ENCODE measurements at regions of chr2 and their contacts with region 1.

Region 1: GRCh38 chr2:5691975-5692529 is at the start of gene SOX11:
- DNase-seq: peak; percentile 95
- ATAC-seq: peak; percentile 78
- H3K4me3 ChIP-seq: peak within 1 kb of the TSS; percentile 74
- H3K27ac ChIP-seq: peak within 1 kb of the TSS; percentile 77
- H3K4me1 ChIP-seq: peaks cover 1% of the 10 kb centered on the region; the same call in 1 of the 2 replicates
- H3K27me3 ChIP-seq: no peaks in the 10 kb centered on the region
- CTCF ChIP-seq: no peak
- POLR2A ChIP-seq: peak; percentile 91
- RAD21 ChIP-seq: no peak
- total RNA-seq, gene SOX11: 2.2 and 4.7 TPM in 2 replicates

Region 2: DNA sequence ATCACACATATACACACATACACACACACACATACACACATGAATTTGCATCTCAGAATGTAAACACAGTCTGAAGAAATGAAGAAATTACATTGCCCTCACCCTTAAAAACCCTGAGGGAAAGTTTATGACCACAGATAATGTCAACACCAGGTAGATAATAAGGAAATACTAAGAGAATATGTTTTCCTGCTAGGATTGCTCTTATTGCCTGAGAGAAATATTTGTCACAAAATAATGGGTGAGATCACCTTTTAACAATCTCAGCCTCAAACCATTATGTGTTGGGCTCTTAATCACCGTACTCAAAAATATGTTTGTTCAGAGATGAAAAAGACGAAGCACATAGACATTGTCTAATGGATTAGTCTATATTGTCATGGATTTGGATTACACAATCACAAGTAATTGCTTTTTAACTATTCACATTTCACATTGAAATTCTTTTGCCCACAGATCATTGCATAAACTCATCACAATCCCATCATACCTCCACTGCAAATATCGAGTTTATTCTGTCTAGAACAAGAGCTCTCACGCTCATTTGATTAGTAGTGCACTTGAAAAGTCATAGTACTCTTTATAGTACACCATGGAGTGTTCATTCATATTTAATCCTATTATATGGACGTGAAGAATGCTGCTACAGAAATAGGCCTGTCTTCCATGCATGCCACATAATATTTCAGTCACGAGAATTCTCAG is 97.9 kb before region 1 on chr2:
- CTCF ChIA-PET with region 1: no interaction called
- POLR2A ChIA-PET with region 1: no interaction called
- dilution Hi-C with region 1: no loop called
- in situ Hi-C with region 1: no loop called
- intact Hi-C with region 1: no loop called
- DNase-seq: no peak
- ATAC-seq: no peak
- H3K4me3 ChIP-seq: no peak overlapping the region
- H3K27ac ChIP-seq: no peak overlapping the region
- H3K4me1 ChIP-seq: peaks cover 3% of the 10 kb centered on the region; the same call in 1 of the 2 replicates
- H3K27me3 ChIP-seq: no peaks in the 10 kb centered on the region; the same call in 1 of the 2 replicates
- CTCF ChIP-seq: no peak
- POLR2A ChIP-seq: no peak
- RAD21 ChIP-seq: no peak

Region 3: GRCh38 chr2:6011921-6012320 is 319.9 kb after region 1 on chr2:
- CTCF ChIA-PET with region 1: no interaction called
- POLR2A ChIA-PET with region 1: no interaction called
- dilution Hi-C with region 1: no loop called
- in situ Hi-C with region 1: no loop called
- intact Hi-C with region 1: no loop called
- DNase-seq: no peak
- ATAC-seq: no peak
- H3K4me3 ChIP-seq: no peak overlapping the region
- H3K27ac ChIP-seq: no peak overlapping the region
- H3K4me1 ChIP-seq: peaks cover 3% of the 10 kb centered on the region; the same call in 1 of the 2 replicates
- H3K27me3 ChIP-seq: no peaks in the 10 kb centered on the region
- CTCF ChIP-seq: no peak
- POLR2A ChIP-seq: no peak
- RAD21 ChIP-seq: no peak

Region 4: GRCh38 chr2:6186332-6187151 is 494.5 kb after region 1 on chr2:
- CTCF ChIA-PET with region 1: no interaction called
- POLR2A ChIA-PET with region 1: no interaction called
- dilution Hi-C with region 1: no loop called
- in situ Hi-C with region 1: no loop called
- intact Hi-C with region 1: loop called (anchors 5 kb)
- DNase-seq: peak; percentile 87
- ATAC-seq: peak; percentile 92
- H3K4me3 ChIP-seq: no peak overlapping the region
- H3K27ac ChIP-seq: peak overlapping the region; percentile 41; the same call in 1 of the 2 replicates
- H3K4me1 ChIP-seq: peaks cover 11% of the 10 kb centered on the region
- H3K27me3 ChIP-seq: no peaks in the 10 kb centered on the region
- CTCF ChIP-seq: no peak
- POLR2A ChIP-seq: no peak
- RAD21 ChIP-seq: no peak

Region 5: DNA sequence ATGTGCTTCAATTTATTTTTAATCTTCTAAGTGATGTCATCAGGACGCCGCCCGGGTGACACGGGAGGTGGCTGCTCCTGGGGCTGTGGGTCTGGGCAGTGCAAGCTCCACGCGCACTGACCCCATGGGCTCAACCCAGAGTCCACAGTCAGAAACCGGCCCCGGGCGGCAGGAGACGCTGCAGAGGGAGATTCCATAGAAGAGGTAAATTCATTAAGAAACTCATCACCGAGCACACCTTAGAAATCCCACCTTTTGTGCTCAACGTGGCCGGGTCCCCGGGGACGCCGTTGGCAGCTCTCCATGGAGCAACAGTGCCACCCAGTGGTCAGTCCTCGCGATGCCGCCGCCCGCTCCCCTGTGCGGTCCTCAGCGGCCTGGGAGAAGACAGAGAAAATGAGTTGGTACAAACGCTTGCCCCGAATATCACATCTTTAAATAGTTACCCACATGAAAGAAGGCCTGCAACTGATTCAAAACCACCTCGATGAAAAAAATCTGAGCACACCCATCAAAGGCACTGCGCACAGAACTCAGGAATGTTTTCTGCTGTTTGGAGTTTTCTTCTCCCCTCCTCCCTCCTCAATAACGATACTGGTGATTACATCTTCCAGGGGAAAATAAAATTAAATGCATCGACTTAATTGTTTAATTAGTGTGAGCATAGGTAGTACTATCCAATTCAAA is 1081.1 kb after region 1 on chr2:
- CTCF ChIA-PET with region 1: no interaction called
- POLR2A ChIA-PET with region 1: no interaction called
- dilution Hi-C with region 1: no loop called
- in situ Hi-C with region 1: no loop called
- intact Hi-C with region 1: loop called (anchors 2 kb)
- DNase-seq: peak; percentile 11
- ATAC-seq: peak; percentile 95
- H3K4me3 ChIP-seq: no peak overlapping the region
- H3K27ac ChIP-seq: no peak overlapping the region
- H3K4me1 ChIP-seq: no peaks in the 10 kb centered on the region
- H3K27me3 ChIP-seq: no peaks in the 10 kb centered on the region; the same call in 1 of the 2 replicates
- CTCF ChIP-seq: peak; percentile 93
- POLR2A ChIP-seq: 0 out of 2 replicates have a peak, but pooled peaks have one; percentile 25
- RAD21 ChIP-seq: peak; percentile 97

Measured in IMR-90 (cell line).